Dorsolateral prefrontal cortex (tissue), 120 donors: ENCODE measurements at regions of chr1 and their contacts with region 1.

Region 1: GRCh38 chr1:912740-913301 is 10.9 kb upstream of the SAMD11 start:
- DNase-seq: peak in 2 of 10 donors; percentile 23 to 39
- H3K4me3 ChIP-seq: no peak overlapping the region
- H3K27ac ChIP-seq: no peak overlapping the region
- H3K27me3 ChIP-seq: peaks cover 0 to 73% (median 22%) of the 10 kb centered on the region in 45 donors
- CTCF ChIP-seq: peak in 3 of 56 donors; percentile 9 to 15 (median 13)

Region 2: GRCh38 chr1:932776-933602 is 20.2 kb after region 1 on chr1:
- intact Hi-C with region 1: loop called in 1 of 2 experiments (anchors 2 kb)
- DNase-seq: no peak
- H3K4me3 ChIP-seq: no peak overlapping the region
- H3K27ac ChIP-seq: no peak overlapping the region
- H3K27me3 ChIP-seq: peaks cover 4 to 83% (median 46%) of the 10 kb centered on the region in 45 donors
- CTCF ChIP-seq: no peak